Mammary epithelial cell (primary cell): ENCODE measurements at regions of chr5 and their contacts with region 1.

Region 1: GRCh38 chr5:138024117-138024516 is 8.8 kb downstream of the FAM13B start:
- DNase-seq: peak; percentile 14
- H3K4me3 ChIP-seq: no peak overlapping the region
- H3K27ac ChIP-seq: no peak overlapping the region
- H3K4me1 ChIP-seq: peaks cover 26% of the 10 kb centered on the region
- H3K27me3 ChIP-seq: no peaks in the 10 kb centered on the region
- CTCF ChIP-seq: no peak

Region 2: DNA sequence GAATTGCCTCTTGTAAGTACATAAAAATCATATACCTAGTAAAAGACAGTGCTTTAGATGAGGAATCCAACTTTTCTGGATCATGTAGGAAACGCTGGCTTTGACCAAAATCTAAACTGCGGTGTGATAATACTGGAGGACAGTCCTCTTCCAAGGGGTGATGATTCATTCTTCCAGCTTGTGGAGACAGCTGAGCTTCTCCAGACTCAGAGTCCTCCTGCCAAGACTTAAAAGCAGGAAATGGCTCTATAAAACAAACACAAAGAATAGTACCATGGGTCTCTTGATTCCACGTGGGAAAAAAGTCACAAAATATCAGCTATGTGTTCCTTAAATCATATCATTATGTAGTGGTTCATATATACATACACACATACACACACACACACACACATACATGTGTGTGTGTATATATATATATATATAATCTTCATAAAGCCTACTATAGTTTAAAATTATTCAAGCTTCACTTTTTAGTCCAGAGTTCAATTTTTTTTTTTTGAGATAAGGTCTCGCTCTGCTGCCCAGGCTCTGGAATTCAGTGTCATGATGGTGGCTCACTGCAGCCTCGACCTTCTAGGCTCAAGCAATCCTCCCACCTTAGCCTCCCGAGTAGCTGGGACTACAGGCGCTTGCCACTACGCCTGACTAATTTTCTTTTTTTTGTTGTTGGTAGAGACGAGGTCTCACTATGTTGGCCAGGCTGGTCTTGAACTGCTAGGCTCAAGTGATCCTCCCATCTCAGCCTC is 69.8 kb before region 1 on chr5:
- CTCF ChIA-PET with region 1: interaction called, 4 read pairs
- dilution Hi-C with region 1: loop called (anchors 5 kb)
- in situ Hi-C with region 1: no loop called
- intact Hi-C with region 1: no loop called
- DNase-seq: peak; percentile 21
- H3K4me3 ChIP-seq: no peak overlapping the region
- H3K27ac ChIP-seq: no peak overlapping the region
- H3K4me1 ChIP-seq: no peaks in the 10 kb centered on the region
- H3K27me3 ChIP-seq: no peaks in the 10 kb centered on the region
- CTCF ChIP-seq: no peak